Right ventricle myocardium inferior (tissue), 1 donor: ENCODE measurements at regions of chr4 and their contacts with region 1.

Region 1: DNA sequence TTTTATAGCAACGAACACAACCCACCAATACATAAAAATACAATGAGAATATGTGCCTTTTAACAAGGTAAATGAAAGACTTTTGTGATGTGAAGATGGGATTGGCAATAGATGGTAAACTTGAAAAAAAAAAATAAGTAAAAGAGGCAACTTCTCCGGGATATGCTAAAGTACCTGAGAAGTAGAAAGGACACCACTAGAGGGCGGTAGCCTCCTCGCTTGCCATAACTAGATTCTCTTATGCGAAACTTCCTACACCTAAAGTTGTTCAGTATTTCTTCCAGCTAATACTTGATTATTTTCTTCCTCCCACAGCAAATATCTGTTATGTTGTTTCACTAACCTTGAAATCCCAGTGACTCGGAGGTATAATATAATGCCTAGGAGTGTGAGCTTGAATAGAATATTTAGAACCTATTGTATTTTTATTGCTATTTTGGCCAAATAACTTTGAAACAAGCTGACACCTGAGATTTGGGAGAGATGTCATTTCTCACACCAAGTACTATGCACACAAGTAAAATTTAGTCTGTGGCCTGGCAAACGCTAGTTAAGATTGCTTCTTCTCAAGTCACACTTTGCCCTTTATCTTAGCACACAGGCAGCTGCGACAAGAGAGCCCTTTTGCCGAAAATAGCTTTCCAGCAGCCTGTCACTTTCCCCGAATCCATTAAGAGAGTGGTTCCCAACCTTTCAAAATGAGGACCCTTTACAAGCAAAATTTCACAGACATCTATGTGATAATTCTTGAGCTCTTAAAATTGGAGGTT is 44.9 kb upstream of the PDLIM5 start:
- DNase-seq: no peak
- ATAC-seq: peak; percentile 55

Region 2: GRCh38 chr4:93879919-93880318 is 526.9 kb before region 1 on chr4:
- intact Hi-C with region 1: no loop called
- DNase-seq: no peak
- ATAC-seq: no peak

Region 3: GRCh38 chr4:94221916-94222315 is 184.9 kb before region 1 on chr4:
- intact Hi-C with region 1: no loop called
- DNase-seq: no peak
- ATAC-seq: no peak

Region 4: GRCh38 chr4:94548571-94548970 is 141.7 kb after region 1 on chr4:
- intact Hi-C with region 1: loop called (anchors 5 kb)
- DNase-seq: no peak
- ATAC-seq: peak; percentile 82

Region 5: GRCh38 chr4:94595879-94596483 is 189.1 kb after region 1 on chr4:
- intact Hi-C with region 1: loop called (anchors 1 kb)
- DNase-seq: no peak
- ATAC-seq: no peak